CD4-positive, alpha-beta T cell (primary cell): ENCODE measurements at regions of chr10 and their contacts with region 1.

Region 1: DNA sequence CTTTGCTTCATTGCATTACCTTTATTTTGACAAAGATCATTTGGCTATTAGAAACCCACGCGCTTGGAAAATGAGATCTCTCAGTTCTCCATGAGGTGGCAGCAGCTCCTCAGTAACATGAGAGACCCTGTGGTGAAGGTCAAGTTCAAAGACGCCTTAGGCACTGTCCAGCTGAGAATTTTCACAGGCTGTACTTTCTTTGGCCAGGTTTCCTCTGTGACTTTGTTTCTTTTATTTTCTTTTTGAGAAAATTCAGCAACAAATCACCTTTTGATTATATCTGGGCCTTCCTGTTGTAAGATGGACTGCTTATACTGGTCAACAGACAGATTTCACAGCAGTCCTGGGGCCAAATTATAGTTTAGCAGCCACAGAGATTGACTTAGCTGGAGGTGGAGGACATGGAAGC is 54.5 kb downstream of the RAB18 start:
- DNase-seq: peak in 7 of 14 experiments; percentile 4 to 58 (median 36)
- ATAC-seq: no peak
- H3K4me3 ChIP-seq: no peak overlapping the region
- H3K4me3 Mint-ChIP-seq: no peak overlapping the region
- H3K27ac ChIP-seq: no peak overlapping the region
- H3K27ac Mint-ChIP-seq: no peak overlapping the region
- H3K4me1 ChIP-seq: peaks cover under 1% of the 10 kb centered on the region
- H3K4me1 Mint-ChIP-seq: no peaks in the 10 kb centered on the region
- H3K27me3 ChIP-seq: no peaks in the 10 kb centered on the region
- H3K27me3 Mint-ChIP-seq: no peaks in the 10 kb centered on the region
- CTCF ChIP-seq: peak; percentile 46

Region 2: GRCh38 chr10:27536437-27536836 is 22.2 kb before region 1 on chr10:
- CTCF ChIA-PET with region 1: no interaction called
- POLR2A ChIA-PET with region 1: no interaction called
- intact Hi-C with region 1: no loop called
- DNase-seq: no peak
- ATAC-seq: no peak
- H3K4me3 ChIP-seq: no peak overlapping the region
- H3K4me3 Mint-ChIP-seq: no peak overlapping the region
- H3K27ac ChIP-seq: no peak overlapping the region
- H3K27ac Mint-ChIP-seq: no peak overlapping the region
- H3K4me1 ChIP-seq: no peaks in the 10 kb centered on the region
- H3K4me1 Mint-ChIP-seq: peaks cover 23% of the 10 kb centered on the region
- H3K27me3 ChIP-seq: no peaks in the 10 kb centered on the region
- H3K27me3 Mint-ChIP-seq: no peaks in the 10 kb centered on the region
- CTCF ChIP-seq: no peak

Region 3: GRCh38 chr10:27661514-27662286 is 103.1 kb after region 1 on chr10:
- CTCF ChIA-PET with region 1: no interaction called
- POLR2A ChIA-PET with region 1: no interaction called
- intact Hi-C with region 1: loop called (anchors 2 kb)
- DNase-seq: no peak
- ATAC-seq: no peak
- H3K4me3 ChIP-seq: no peak overlapping the region
- H3K4me3 Mint-ChIP-seq: no peak overlapping the region
- H3K27ac ChIP-seq: no peak overlapping the region
- H3K27ac Mint-ChIP-seq: no peak overlapping the region
- H3K4me1 ChIP-seq: no peaks in the 10 kb centered on the region
- H3K4me1 Mint-ChIP-seq: no peaks in the 10 kb centered on the region
- H3K27me3 ChIP-seq: peaks cover 3 to 24% of the 10 kb centered on the region in 2 experiments
- H3K27me3 Mint-ChIP-seq: peaks cover 45% of the 10 kb centered on the region
- CTCF ChIP-seq: no peak

Region 4: DNA sequence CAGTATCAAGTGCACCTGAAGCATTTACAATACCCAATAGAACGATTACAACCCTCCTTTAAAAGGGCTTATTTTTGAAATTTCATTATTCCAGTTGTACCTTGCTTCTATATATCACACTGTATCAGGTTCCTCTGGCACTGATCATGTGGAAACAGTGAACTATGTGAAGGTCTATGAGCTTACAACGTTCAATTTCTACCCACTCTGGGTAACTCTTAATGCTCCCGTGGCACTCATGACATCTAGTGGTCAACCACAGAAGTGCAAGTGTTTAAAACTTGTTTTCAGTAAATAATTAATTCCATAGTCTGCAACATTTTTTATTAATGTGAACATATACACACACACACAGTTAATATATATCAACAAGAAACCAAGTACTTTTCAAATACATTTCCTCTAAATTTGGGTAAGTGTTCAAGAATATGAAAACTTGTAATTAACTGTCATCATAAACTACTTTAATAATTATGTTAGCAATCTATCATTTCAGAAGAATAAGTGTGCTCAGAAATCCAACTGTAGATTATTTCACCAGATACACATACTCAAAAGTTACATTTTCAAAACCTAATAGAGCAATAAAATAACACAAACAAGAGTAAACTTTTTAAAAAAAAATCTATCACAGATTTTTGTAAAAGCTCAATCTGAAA is 683.3 kb after region 1 on chr10:
- CTCF ChIA-PET with region 1: interaction called, 3 read pairs
- POLR2A ChIA-PET with region 1: no interaction called
- intact Hi-C with region 1: loop called in 1 of 2 experiments (anchors 10 kb)
- DNase-seq: peak in 8 of 14 experiments; percentile 7 to 74 (median 36)
- ATAC-seq: peak; percentile 78
- H3K4me3 ChIP-seq: no peak overlapping the region
- H3K4me3 Mint-ChIP-seq: no peak overlapping the region
- H3K27ac ChIP-seq: no peak overlapping the region
- H3K27ac Mint-ChIP-seq: no peak overlapping the region
- H3K4me1 ChIP-seq: peaks cover 3% of the 10 kb centered on the region
- H3K4me1 Mint-ChIP-seq: peaks cover 45% of the 10 kb centered on the region
- H3K27me3 ChIP-seq: no peaks in the 10 kb centered on the region
- H3K27me3 Mint-ChIP-seq: no peaks in the 10 kb centered on the region
- CTCF ChIP-seq: peak; percentile 98

Region 5: DNA sequence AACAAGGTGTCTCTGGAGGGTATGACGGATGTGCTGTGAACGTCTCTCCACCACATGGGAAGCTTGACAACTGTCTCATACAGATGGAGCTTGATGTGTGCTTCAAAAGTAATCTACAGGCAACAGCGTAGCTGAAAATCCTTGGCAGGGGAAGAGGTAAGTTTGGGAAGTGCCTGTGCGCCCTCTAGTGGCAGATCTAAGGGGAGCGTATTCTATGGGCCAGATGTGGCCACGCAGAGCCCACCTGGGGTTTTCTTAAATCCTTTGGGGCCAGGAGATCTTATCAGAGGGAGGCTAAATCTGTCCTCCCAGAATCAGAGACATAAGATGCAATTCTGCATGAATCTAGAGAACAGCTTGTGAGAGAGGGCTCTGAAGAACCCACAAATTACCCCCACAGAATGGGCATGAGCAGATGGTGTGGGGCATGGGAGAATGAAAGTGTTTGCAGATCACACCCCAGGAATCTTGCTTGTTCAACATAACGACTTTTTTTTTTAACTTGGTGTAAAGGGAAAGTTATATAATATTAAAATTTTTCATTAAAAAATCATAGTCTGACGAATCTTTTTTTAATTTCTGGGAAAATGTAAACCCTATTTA is 835.5 kb after region 1 on chr10:
- CTCF ChIA-PET with region 1: no interaction called
- POLR2A ChIA-PET with region 1: no interaction called
- intact Hi-C with region 1: loop called in 1 of 2 experiments (anchors 5 kb)
- DNase-seq: peak; percentile 45 to 85 (median 54)
- ATAC-seq: peak; percentile 80
- H3K4me3 ChIP-seq: no peak overlapping the region
- H3K4me3 Mint-ChIP-seq: no peak overlapping the region
- H3K27ac ChIP-seq: no peak overlapping the region
- H3K27ac Mint-ChIP-seq: no peak overlapping the region
- H3K4me1 ChIP-seq: peaks cover 5% of the 10 kb centered on the region
- H3K4me1 Mint-ChIP-seq: peaks cover 6% of the 10 kb centered on the region
- H3K27me3 ChIP-seq: no peaks in the 10 kb centered on the region
- H3K27me3 Mint-ChIP-seq: peaks cover 6% of the 10 kb centered on the region
- CTCF ChIP-seq: peak; percentile 91